Caco-2 (cell line): ENCODE measurements at regions of chr1 and their contacts with region 1.

Region 1: DNA sequence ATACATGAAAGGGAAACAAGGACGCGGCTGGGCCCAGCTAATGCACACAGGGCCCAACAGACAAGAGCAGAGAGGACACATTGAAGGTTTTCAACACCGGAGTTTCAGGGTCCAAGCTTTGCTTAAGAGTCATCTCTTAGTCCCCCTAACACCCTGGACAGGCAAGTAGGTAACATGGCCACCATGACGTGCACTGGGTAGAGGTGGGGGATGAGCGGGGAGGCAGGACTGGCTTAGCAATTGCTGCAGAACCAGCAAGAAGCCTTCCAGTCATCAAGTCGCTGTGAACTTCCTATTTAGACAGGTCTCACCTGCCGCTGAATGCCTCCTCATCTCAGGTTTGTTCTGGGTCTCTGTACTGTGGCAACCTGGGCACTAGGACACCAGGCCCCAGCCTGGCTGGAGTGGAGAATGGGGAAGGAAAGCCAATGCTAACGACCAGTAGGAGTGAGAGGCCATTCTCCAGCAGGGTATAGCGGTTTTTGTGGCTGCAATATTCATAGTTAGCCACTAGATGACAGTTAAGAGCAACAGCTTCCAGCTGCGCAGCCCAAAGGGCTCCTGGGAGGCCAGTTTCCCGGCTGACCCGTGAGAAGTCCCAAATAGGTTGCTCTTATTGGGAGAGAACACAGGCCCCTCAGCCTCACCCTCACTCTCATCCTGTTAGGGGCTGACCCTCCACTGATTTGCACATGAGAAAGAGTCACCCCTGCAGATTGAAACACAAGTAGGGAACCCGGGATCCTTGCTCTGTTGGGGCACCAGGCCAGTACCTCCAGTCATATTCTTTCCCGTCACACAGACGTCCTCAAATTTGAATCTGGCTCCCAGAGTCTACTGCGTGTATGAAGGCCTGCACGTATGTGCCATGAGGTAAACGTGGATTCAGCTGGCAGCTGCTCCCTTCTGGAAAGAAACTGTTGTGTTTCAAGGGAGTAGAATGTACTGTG is 6.0 kb upstream of the PIGC start:
- DNase-seq: peak; percentile 82 to 83
- H3K4me3 ChIP-seq: peak overlapping the region; percentile 9
- H3K4me3 Mint-ChIP-seq: peak overlapping the region; percentile 68
- H3K27ac Mint-ChIP-seq: peak overlapping the region; percentile 88
- H3K4me1 ChIP-seq: peaks cover 70% of the 10 kb centered on the region
- H3K4me1 Mint-ChIP-seq: peaks cover 63% of the 10 kb centered on the region
- H3K27me3 ChIP-seq: no peaks in the 10 kb centered on the region
- H3K27me3 Mint-ChIP-seq: no peaks in the 10 kb centered on the region
- CTCF ChIP-seq: peak; percentile 90 to 96

Region 2: GRCh38 chr1:172469717-172470116 is 19.9 kb after region 1 on chr1:
- CTCF ChIA-PET with region 1: no interaction called
- POLR2A ChIA-PET with region 1: interaction called, 5 read pairs
- intact Hi-C with region 1: loop called (anchors 1 kb)
- DNase-seq: peak; percentile 65 to 73
- H3K4me3 ChIP-seq: no peak overlapping the region
- H3K4me3 Mint-ChIP-seq: peak overlapping the region; percentile 62
- H3K27ac Mint-ChIP-seq: peak overlapping the region; percentile 94
- H3K4me1 ChIP-seq: peaks cover 74% of the 10 kb centered on the region
- H3K4me1 Mint-ChIP-seq: peaks cover 55% of the 10 kb centered on the region
- H3K27me3 ChIP-seq: no peaks in the 10 kb centered on the region
- H3K27me3 Mint-ChIP-seq: no peaks in the 10 kb centered on the region
- CTCF ChIP-seq: no peak

Region 3: GRCh38 chr1:172532700-172533509 is 83.0 kb after region 1 on chr1 and contains the start of gene SUCO:
- CTCF ChIA-PET with region 1: interaction called, 21 read pairs
- POLR2A ChIA-PET with region 1: interaction called, 42 read pairs
- intact Hi-C with region 1: loop called (anchors 1 kb)
- DNase-seq: peak; percentile 100
- H3K4me3 ChIP-seq: peak within 1 kb of the TSS; percentile 69
- H3K4me3 Mint-ChIP-seq: peak within 1 kb of the TSS; percentile 87
- H3K27ac Mint-ChIP-seq: peak within 1 kb of the TSS; percentile 84
- H3K4me1 ChIP-seq: peaks cover 32% of the 10 kb centered on the region
- H3K4me1 Mint-ChIP-seq: peaks cover 47% of the 10 kb centered on the region
- H3K27me3 ChIP-seq: no peaks in the 10 kb centered on the region
- H3K27me3 Mint-ChIP-seq: no peaks in the 10 kb centered on the region
- CTCF ChIP-seq: peak in 1 of 2 experiments; percentile 20
- total RNA-seq, gene SUCO: 48.4 and 50.3 TPM in 2 replicates

Region 4: DNA sequence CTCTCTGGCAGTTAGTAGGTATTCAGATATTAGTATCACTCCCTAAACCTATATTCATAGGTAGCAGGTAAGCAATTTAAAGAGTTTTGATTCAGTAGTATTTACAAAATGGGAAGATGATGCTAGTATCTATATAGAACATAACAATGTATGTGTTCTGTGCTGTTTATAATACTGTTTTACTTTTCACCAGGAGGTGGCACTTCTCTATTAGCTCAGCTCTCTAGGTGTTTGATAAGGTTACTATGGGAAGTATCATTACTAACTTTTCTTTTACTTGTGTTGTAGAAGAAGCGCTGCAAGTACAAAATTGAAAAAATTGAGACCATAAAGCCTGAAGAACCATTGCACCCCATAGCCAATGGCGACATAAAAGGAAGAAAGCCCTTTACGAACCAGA is 159.7 kb after region 1 on chr1:
- CTCF ChIA-PET with region 1: interaction called, 3 read pairs
- POLR2A ChIA-PET with region 1: no interaction called
- intact Hi-C with region 1: loop called (anchors 2 kb)
- DNase-seq: peak in 1 of 2 experiments; percentile 12
- H3K4me3 ChIP-seq: no peak overlapping the region
- H3K4me3 Mint-ChIP-seq: no peak overlapping the region
- H3K27ac Mint-ChIP-seq: no peak overlapping the region
- H3K4me1 ChIP-seq: peaks cover 4% of the 10 kb centered on the region
- H3K4me1 Mint-ChIP-seq: no peaks in the 10 kb centered on the region
- H3K27me3 ChIP-seq: no peaks in the 10 kb centered on the region
- H3K27me3 Mint-ChIP-seq: no peaks in the 10 kb centered on the region
- CTCF ChIP-seq: peak; percentile 15 to 44

Region 5: GRCh38 chr1:173314656-173315055 is 864.8 kb after region 1 on chr1:
- CTCF ChIA-PET with region 1: no interaction called
- POLR2A ChIA-PET with region 1: no interaction called
- intact Hi-C with region 1: no loop called
- DNase-seq: no peak
- H3K4me3 ChIP-seq: no peak overlapping the region
- H3K4me3 Mint-ChIP-seq: no peak overlapping the region
- H3K27ac Mint-ChIP-seq: no peak overlapping the region
- H3K4me1 ChIP-seq: no peaks in the 10 kb centered on the region
- H3K4me1 Mint-ChIP-seq: no peaks in the 10 kb centered on the region
- H3K27me3 ChIP-seq: no peaks in the 10 kb centered on the region
- H3K27me3 Mint-ChIP-seq: peaks cover 4% of the 10 kb centered on the region
- CTCF ChIP-seq: no peak